MCF 10A (cell line): ENCODE measurements at regions of chr3 and their contacts with region 1.

Region 1: DNA sequence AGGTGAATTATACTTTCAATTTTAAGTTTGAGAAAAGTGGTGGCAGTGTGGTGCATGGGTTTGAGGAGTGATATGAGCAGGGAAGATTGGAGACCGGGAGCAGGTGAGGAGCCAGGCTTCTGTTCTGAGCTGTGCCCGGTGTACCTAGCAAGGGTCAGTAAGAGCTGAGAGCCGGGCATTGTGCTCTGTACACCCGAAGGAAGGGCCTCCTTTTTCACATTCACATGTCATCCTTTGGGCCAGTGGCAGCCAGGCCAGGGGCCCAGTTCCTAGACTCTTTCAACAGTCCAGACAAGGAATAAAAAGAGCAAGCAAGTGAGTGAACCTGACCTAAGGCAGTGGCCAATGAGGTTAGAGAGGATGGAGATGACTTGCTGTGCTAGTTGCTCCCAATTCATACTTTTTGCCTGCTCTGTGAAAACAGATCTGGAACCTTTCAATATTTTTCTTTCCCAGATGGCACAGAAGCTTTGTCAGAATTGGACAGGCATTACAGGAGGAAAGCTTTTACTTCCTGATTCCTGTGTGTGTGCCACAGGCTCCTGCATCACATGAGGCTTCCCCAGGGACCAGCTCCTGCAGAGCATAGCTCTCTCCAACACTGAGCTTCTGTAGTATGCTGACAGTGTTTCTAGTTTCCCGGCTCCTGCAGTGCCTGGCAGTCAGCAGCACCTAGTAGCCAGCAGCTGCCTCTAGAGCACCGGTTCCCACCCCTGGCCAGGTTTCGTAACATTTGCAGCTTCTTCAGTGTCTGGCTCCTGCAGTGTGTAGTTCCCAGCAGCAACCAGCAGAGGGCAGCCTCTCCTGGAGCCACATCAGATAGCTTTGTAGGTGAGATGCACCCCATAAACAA is 5.3 kb upstream of the TRA2B start:
- DNase-seq: peak; percentile 93
- H3K4me3 Mint-ChIP-seq: no peak overlapping the region
- H3K27ac Mint-ChIP-seq: no peak overlapping the region
- H3K4me1 Mint-ChIP-seq: peaks cover 11% of the 10 kb centered on the region
- H3K27me3 Mint-ChIP-seq: peaks cover 7% of the 10 kb centered on the region
- CTCF ChIP-seq: peak; percentile 98

Region 2: DNA sequence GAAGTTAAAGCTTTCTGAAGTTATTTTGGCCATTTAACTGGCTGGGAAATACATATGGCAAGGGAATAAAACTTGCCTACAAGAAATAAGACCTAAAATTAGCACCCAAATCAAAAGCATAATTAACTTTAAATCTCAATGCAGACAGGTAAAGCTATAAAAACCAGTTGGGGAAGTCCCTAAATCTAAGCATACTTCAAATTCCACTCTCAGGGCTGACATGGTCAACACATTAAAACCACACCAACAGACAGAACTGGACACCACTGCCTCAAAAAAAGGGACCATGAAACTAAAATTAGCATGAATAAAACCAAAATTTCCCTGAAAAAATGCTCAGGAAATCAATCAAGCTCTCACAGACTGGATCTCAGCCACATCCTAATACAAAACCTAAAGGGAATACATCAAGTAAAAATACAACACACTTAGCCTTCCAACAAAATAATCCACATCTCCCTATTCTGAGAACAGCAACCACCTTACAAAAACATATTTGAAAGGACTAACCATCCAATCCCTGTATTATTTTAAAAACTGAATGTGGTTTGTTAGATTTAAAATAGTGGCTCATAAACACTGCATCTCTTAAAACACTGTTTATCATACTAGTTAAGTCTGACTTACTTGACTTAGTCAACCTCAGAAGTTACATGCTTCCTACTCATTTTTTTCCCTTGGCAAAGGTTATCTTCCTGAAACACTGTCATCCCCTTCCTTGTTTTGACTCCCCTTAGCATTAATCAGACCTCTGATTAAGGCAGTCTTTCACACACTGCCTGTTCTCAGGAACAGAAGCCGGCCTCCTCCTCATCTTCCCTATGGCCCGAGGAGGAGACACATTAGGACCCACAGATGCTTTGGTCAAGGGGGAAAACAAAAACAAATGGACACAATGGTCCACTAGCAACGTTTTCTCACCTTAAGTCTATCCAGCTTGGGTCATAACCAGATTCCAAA is 13.7 kb before region 1 on chr3:
- CTCF ChIA-PET with region 1: interaction called, 28 read pairs
- POLR2A ChIA-PET with region 1: interaction called, 121 read pairs
- intact Hi-C with region 1: no loop called
- DNase-seq: no peak
- H3K4me3 Mint-ChIP-seq: peak overlapping the region; percentile 98
- H3K27ac Mint-ChIP-seq: peak overlapping the region; percentile 21
- H3K4me1 Mint-ChIP-seq: peaks cover 93% of the 10 kb centered on the region
- H3K27me3 Mint-ChIP-seq: no peaks in the 10 kb centered on the region
- CTCF ChIP-seq: no peak

Region 3: DNA sequence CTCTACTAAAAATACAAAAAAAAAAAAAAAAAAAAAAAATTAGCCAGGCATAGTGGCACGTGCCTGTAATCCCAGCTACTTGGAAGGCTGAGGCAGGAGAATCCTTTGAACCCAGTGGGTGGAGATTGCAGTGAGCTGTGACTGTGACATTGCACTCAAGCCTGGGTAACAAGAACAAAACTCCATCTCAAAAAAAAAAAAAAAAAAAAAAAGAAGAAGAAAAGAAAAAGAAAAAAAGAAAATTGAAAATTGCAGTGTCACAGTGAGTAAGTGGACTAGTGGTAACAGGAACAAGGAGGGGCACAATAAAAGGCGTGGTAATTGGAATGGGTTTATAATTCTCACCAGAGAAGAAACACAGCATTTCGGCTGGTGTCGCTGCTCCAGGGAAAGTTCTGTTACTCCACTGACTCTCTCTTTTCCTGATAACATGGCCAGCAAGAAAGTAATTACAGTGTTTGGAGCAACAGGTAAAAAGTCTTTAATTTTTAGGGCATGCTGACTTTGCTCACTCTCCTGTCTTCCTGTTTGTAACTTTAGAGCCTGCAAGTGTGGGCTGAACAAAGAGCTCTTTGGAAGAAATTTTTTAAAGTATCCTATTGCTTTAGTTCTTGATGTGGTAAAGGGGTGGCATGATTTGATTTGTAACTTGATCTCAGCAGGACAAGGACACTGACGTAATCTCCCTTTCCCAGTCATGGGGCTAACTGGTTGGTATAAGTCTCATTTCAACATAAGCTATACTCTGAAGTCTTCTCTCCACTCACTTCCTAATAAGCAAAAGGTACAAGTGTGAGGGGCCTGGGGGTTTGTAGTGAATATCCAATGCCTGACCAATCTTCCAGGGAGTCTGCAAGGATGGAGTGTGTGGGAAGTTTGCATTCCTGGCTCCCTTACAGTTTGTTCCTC is 16.7 kb after region 1 on chr3:
- CTCF ChIA-PET with region 1: interaction called, 118 read pairs
- POLR2A ChIA-PET with region 1: interaction called, 15 read pairs
- intact Hi-C with region 1: no loop called
- DNase-seq: peak; percentile 88
- H3K4me3 Mint-ChIP-seq: no peak overlapping the region
- H3K27ac Mint-ChIP-seq: no peak overlapping the region
- H3K4me1 Mint-ChIP-seq: peaks cover 7% of the 10 kb centered on the region
- H3K27me3 Mint-ChIP-seq: no peaks in the 10 kb centered on the region
- CTCF ChIP-seq: no peak

Region 4: DNA sequence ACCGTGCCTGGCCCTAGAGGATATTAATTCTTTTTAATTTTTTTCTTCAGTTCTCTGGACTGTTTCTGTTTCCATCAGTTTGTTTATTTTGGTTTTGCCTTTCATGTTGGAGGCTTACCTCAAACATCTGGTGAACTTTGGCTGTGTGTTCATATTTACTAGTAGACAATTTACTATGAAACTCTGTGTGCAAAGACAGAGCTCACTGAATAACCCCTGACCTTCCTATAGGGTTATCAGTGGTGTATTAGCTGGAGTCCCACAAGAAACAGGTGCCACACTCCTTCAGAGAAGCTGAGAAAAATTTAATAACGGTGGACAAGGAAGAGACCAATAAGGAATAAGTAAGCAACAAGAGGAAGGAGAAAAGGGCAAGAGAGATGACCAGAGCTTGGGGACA is 23.5 kb after region 1 on chr3:
- CTCF ChIA-PET with region 1: interaction called, 17 read pairs
- POLR2A ChIA-PET with region 1: interaction called, 5 read pairs
- intact Hi-C with region 1: no loop called
- DNase-seq: no peak
- H3K4me3 Mint-ChIP-seq: no peak overlapping the region
- H3K27ac Mint-ChIP-seq: no peak overlapping the region
- H3K4me1 Mint-ChIP-seq: no peaks in the 10 kb centered on the region
- H3K27me3 Mint-ChIP-seq: no peaks in the 10 kb centered on the region
- CTCF ChIP-seq: no peak

Region 5: GRCh38 chr3:185976977-185977678 is 34.0 kb after region 1 on chr3:
- CTCF ChIA-PET with region 1: interaction called, 33 read pairs
- POLR2A ChIA-PET with region 1: interaction called, 5 read pairs
- intact Hi-C with region 1: no loop called
- DNase-seq: peak; percentile 72
- H3K4me3 Mint-ChIP-seq: no peak overlapping the region
- H3K27ac Mint-ChIP-seq: no peak overlapping the region
- H3K4me1 Mint-ChIP-seq: no peaks in the 10 kb centered on the region
- H3K27me3 Mint-ChIP-seq: no peaks in the 10 kb centered on the region
- CTCF ChIP-seq: peak; percentile 87

Region 6: GRCh38 chr3:186534113-186534669 is 591.1 kb after region 1 on chr3:
- CTCF ChIA-PET with region 1: interaction called, 17 read pairs
- POLR2A ChIA-PET with region 1: no interaction called
- intact Hi-C with region 1: no loop called
- DNase-seq: no peak
- H3K4me3 Mint-ChIP-seq: no peak overlapping the region
- H3K27ac Mint-ChIP-seq: no peak overlapping the region
- H3K4me1 Mint-ChIP-seq: no peaks in the 10 kb centered on the region
- H3K27me3 Mint-ChIP-seq: no peaks in the 10 kb centered on the region
- CTCF ChIP-seq: no peak